ENCODE measurements at regions of chr4 and their contacts with region 1.

Region 1: GRCh38 chr4:113355550-113356371 is 306.3 kb downstream of the ANK2 start:
- DNase-seq: peak; percentile 88
- ATAC-seq: peak; percentile 95
- H3K4me3 Mint-ChIP-seq: peak overlapping the region; percentile 47
- H3K27ac Mint-ChIP-seq: peak overlapping the region; percentile 94
- H3K4me1 Mint-ChIP-seq: peaks cover 43% of the 10 kb centered on the region
- H3K27me3 Mint-ChIP-seq: peaks cover 42% of the 10 kb centered on the region

Region 2: GRCh38 chr4:112523764-112524505 is 831.8 kb before region 1 on chr4:
- CTCF ChIA-PET with region 1: no interaction called
- POLR2A ChIA-PET with region 1: no interaction called
- intact Hi-C with region 1: no loop called
- DNase-seq: peak; percentile 89
- ATAC-seq: peak; percentile 92
- H3K4me3 Mint-ChIP-seq: peak overlapping the region; percentile 72
- H3K27ac Mint-ChIP-seq: no peak overlapping the region
- H3K4me1 Mint-ChIP-seq: peaks cover 22% of the 10 kb centered on the region
- H3K27me3 Mint-ChIP-seq: peaks cover 47% of the 10 kb centered on the region

Region 3: DNA sequence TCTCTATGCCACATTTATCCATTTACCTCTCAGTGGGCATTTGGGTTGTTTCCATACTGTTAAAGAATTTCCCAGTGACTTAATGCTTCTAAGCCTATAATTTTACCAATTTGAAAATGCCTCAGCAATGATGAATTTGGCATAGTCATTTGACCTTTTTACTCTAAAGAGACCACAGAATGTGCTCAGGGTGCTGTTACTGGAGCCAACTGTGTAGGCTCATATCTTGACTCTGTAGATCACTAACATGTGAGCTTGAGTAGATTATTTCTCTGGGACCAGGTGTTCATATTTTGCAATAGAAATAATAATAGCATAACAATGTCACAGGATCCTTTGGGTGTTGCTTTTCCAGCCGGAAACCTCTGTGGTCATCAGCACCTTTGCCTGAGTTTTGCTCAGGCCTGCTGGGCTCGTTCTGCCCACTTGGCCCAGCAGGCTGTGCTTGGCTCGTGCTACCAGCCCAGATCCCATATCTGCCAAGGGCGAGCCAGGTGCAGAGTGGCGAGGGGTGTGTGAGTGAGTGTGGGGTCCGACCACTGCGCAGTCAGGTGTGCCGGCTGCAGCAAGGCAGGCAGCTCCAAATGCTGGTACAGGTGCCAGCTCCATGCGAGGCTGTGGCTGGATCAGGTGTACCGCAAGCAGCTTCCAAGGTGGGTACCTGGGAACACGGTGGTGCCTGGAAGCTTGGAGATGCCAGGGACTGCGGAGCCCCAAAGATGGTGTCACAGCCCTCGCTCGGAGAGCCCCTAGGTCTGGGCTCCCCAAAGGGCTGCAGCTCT is 376.9 kb before region 1 on chr4:
- CTCF ChIA-PET with region 1: no interaction called
- POLR2A ChIA-PET with region 1: no interaction called
- intact Hi-C with region 1: no loop called
- DNase-seq: no peak
- ATAC-seq: no peak
- H3K4me3 Mint-ChIP-seq: no peak overlapping the region
- H3K27ac Mint-ChIP-seq: no peak overlapping the region
- H3K4me1 Mint-ChIP-seq: no peaks in the 10 kb centered on the region
- H3K27me3 Mint-ChIP-seq: peaks cover 6% of the 10 kb centered on the region

Region 4: GRCh38 chr4:113278324-113278934 is 77.3 kb before region 1 on chr4:
- CTCF ChIA-PET with region 1: interaction called, 3 read pairs
- POLR2A ChIA-PET with region 1: no interaction called
- intact Hi-C with region 1: loop called (anchors 1 to 5 kb)
- DNase-seq: peak; percentile 84
- ATAC-seq: peak; percentile 99
- H3K4me3 Mint-ChIP-seq: no peak overlapping the region
- H3K27ac Mint-ChIP-seq: no peak overlapping the region
- H3K4me1 Mint-ChIP-seq: no peaks in the 10 kb centered on the region
- H3K27me3 Mint-ChIP-seq: peaks cover 11% of the 10 kb centered on the region

Region 5: DNA sequence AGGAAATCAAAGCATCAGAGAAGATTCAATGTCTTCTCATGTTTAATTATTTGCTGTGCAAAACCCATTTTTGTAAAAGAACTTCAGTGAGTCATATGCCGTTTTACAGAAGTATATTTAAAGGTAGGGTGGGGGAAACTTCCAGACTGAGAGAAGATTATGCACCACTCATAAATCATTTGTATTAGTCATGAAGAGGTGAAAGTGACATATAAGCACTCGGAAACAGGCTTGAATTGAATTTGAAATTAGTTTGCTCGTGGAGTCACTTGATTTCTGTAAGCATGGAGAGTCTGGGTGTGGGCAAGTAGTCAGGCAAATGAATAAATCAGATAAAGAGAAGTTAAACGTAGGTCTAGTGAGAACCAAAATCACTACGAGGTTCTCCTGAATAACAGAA is 28.8 kb after region 1 on chr4:
- CTCF ChIA-PET with region 1: interaction called, 6 read pairs
- POLR2A ChIA-PET with region 1: no interaction called
- intact Hi-C with region 1: loop called in 1 of 2 experiments (anchors 1 kb)
- DNase-seq: peak; percentile 16
- ATAC-seq: peak; percentile 98
- H3K4me3 Mint-ChIP-seq: no peak overlapping the region
- H3K27ac Mint-ChIP-seq: peak overlapping the region; percentile 47
- H3K4me1 Mint-ChIP-seq: peaks cover 22% of the 10 kb centered on the region
- H3K27me3 Mint-ChIP-seq: peaks cover 2% of the 10 kb centered on the region

Region 6: DNA sequence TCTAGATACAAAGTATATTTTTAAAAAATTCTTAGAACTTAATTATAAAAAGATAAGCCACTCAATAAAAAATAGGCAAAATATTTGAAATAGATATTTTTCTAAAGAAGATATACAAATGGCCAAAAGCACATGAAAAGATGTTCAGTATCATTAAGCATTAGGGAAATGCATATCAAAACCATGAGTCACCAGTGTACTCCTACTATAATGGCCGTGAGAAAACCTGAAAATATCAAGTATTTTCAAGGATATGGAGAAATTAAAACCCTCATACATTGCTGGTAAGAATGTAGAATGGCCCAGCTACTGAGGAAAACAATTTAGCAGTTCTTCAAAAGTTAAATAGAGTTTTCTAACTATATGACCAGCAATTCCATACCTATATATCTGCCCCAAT is 67.9 kb after region 1 on chr4:
- CTCF ChIA-PET with region 1: no interaction called
- POLR2A ChIA-PET with region 1: no interaction called
- intact Hi-C with region 1: no loop called
- DNase-seq: no peak
- ATAC-seq: no peak
- H3K4me3 Mint-ChIP-seq: no peak overlapping the region
- H3K27ac Mint-ChIP-seq: no peak overlapping the region
- H3K4me1 Mint-ChIP-seq: no peaks in the 10 kb centered on the region
- H3K27me3 Mint-ChIP-seq: peaks cover 2% of the 10 kb centered on the region

Region 7: GRCh38 chr4:113474017-113474416 is 118.3 kb after region 1 on chr4:
- CTCF ChIA-PET with region 1: no interaction called
- POLR2A ChIA-PET with region 1: no interaction called
- intact Hi-C with region 1: loop called in 1 of 2 experiments (anchors 2 kb)
- DNase-seq: peak; percentile 47
- ATAC-seq: peak; percentile 76
- H3K4me3 Mint-ChIP-seq: no peak overlapping the region
- H3K27ac Mint-ChIP-seq: peak overlapping the region; percentile 88
- H3K4me1 Mint-ChIP-seq: peaks cover 66% of the 10 kb centered on the region
- H3K27me3 Mint-ChIP-seq: no peaks in the 10 kb centered on the region

Region 8: DNA sequence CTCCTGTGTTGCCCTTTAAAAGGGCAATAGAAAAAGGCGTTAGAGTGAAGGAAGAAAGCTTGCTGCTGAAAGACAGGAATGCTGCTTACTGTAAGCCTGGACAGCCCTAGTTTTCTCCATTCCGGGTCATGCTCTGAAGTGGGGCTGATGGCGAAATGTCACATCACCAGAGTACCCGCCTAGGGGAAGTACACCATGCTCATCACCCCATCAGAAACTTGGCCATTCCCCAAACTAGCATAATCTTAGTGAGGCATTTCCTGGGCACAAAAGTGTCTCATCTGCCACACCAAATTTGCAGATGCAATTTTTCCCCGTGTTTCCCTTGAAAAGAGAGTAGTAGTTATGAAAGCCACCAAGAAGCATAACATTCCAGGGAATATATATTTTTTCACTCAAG is 453.6 kb after region 1 on chr4:
- CTCF ChIA-PET with region 1: no interaction called
- POLR2A ChIA-PET with region 1: no interaction called
- intact Hi-C with region 1: no loop called
- DNase-seq: no peak
- ATAC-seq: no peak
- H3K4me3 Mint-ChIP-seq: no peak overlapping the region
- H3K27ac Mint-ChIP-seq: no peak overlapping the region
- H3K4me1 Mint-ChIP-seq: peaks cover 10% of the 10 kb centered on the region
- H3K27me3 Mint-ChIP-seq: no peaks in the 10 kb centered on the region

Region 9: DNA sequence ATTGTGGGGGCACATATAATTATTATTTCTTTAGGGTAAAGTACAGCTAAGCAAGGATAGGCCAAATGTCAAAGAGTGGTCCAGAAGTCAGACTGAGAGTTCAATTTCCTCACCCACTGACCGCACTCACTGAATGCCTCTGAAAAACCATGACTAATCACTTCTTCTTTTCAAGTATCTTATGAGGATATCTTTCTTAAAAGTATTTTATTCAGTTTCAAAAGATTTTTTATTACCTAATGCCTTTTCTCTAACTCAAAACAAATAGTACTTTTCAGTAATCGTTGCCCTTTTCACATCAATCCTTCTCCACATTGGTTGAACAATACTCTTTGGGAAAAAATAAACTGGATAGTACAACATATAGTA is 467.5 kb after region 1 on chr4:
- CTCF ChIA-PET with region 1: no interaction called
- POLR2A ChIA-PET with region 1: no interaction called
- intact Hi-C with region 1: loop called in 1 of 2 experiments (anchors 5 kb)
- DNase-seq: peak; percentile 12
- ATAC-seq: no peak
- H3K4me3 Mint-ChIP-seq: no peak overlapping the region
- H3K27ac Mint-ChIP-seq: peak overlapping the region; percentile 40
- H3K4me1 Mint-ChIP-seq: peaks cover 62% of the 10 kb centered on the region
- H3K27me3 Mint-ChIP-seq: no peaks in the 10 kb centered on the region

Measured in activated CD4-positive, alpha-beta T cell treated with anti-CD3 and anti-CD28 coated beads for 36 hours (primary cell).